Upper lobe of right lung (tissue), 1 donor: ENCODE measurements at regions of chr7 and their contacts with region 1.

Region 1: DNA sequence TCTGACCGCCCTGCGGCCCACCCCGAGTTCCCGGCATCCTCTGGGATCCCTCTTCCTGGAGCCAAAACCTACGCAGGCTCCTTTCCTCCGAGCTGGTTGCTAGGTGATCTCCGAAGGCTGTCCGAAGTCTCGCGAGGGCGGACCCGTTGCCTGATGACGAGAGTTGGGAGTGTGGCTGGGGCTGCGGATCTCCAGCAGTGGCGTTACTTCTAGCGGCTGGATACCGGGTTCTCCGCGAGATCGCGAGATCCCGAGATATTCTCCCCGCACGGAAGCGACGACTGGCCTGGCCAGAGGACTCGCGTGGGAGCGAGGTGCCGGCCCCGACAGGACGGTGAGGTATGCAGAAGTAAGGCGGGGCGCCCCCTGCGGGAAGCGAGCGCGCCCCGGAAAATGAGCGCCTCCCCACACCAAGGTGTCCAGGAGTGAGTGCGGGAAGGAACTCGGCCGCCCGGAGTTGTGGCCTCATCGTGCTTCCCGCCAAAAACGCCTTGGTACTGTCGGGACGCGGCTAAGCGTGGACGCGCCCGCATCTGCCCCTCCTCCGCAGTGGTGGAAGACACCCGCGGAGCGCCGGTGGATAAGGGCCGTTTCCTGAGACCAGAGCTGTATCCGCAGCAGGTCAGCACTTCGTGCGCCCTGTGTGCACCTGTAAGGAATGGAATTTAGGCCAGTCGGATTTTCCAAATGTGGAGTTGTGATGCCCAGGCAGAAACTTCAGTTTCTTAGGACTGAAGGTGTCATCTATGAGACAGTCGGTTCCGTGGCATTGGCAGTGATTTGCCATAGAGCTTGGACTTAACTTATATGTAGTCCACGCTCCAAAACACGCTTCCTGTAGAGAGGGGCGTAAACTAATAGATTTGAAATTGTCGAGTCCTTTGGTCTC is at the start of gene AGBL3:
- DNase-seq: peak; percentile 98
- ATAC-seq: peak; percentile 99
- H3K4me3 ChIP-seq: peak within 1 kb of the TSS; percentile 92
- H3K27ac ChIP-seq: peak within 1 kb of the TSS; percentile 91
- H3K4me1 ChIP-seq: peaks cover 10% of the 10 kb centered on the region
- H3K27me3 ChIP-seq: no peaks in the 10 kb centered on the region
- CTCF ChIP-seq: peak; percentile 58
- total RNA-seq, gene AGBL3: 3.9 TPM

Region 2: DNA sequence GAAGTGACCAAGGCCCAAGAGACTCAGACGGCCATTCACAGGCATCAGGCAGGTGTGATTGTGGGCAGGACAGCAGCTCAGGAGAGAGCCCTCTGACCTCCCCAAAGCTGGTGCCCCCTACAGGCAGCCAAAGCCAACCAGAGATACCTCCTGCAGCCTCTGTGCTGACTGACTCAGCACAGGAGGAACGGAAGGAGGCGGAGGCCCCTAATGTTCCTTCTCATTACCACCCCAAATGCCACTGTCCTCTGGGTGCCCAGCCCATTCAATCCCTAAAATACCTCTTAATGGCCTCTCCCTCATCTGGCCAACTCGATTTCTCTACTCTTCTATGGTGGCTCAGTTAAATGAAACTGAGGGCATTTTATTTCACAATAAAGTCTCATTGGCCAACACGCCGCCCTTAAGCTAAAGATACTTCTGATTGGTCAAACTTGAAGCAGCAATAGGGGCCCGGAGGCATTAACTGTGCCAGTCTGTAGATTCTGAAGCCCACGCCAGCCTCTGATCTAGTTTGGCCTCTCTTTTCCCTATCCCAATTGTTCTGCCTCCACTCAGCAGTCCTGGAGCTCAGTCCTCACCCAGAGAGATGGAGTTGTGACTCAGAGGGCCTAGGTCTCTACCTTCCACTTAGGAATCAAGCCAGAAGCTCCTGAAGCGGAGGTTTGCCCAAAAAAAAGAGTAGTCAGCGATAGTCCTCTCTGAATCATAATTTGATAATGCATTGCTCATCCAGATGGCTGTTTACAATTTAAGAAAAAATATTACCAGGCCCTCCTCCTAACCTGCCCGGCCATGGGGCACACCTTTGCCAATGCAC is 182.7 kb after region 1 on chr7:
- intact Hi-C with region 1: loop called (anchors 10 kb)
- DNase-seq: no peak
- ATAC-seq: peak; percentile 6
- H3K4me3 ChIP-seq: peak overlapping the region; percentile 94
- H3K27ac ChIP-seq: peak overlapping the region; percentile 99
- H3K4me1 ChIP-seq: peaks cover 45% of the 10 kb centered on the region
- H3K27me3 ChIP-seq: no peaks in the 10 kb centered on the region
- CTCF ChIP-seq: peak; percentile 41

Region 3: DNA sequence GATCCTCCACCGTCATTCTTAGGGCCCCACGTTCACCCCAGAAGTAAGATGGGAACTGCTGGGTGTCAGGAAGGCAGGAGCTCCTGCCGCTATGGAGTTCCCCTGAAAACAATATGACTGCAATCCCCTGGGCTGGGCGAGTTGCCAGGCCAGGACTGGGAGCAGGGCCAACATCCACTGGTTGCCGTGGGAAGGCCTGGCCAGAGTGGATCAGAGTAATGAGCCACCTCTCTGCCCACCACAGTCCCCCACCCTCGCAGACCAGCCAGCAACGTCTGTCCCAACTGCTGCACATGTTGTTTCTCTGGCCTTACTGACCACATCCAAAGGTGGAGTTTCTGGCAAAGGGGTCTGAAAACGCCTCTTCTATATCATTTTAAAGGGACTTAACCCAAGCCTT is 333.7 kb after region 1 on chr7:
- intact Hi-C with region 1: no loop called
- DNase-seq: peak; percentile 81
- ATAC-seq: peak; percentile 66
- H3K4me3 ChIP-seq: no peak overlapping the region
- H3K27ac ChIP-seq: no peak overlapping the region
- H3K4me1 ChIP-seq: no peaks in the 10 kb centered on the region
- H3K27me3 ChIP-seq: no peaks in the 10 kb centered on the region
- CTCF ChIP-seq: no peak